Activated CD4-positive, alpha-beta T cell treated with anti-CD3 and anti-CD28 coated beads for 36 hours (primary cell): ENCODE measurements at regions of chr2 and their contacts with region 1.

Region 1: GRCh38 chr2:173134703-173135102 is 59.1 kb downstream of the MAP3K20 start:
- DNase-seq: peak; percentile 16
- ATAC-seq: no peak
- H3K4me3 Mint-ChIP-seq: no peak overlapping the region
- H3K27ac Mint-ChIP-seq: no peak overlapping the region
- H3K4me1 Mint-ChIP-seq: peaks cover 51% of the 10 kb centered on the region
- H3K27me3 Mint-ChIP-seq: peaks cover 38% of the 10 kb centered on the region

Region 2: GRCh38 chr2:173075781-173076580 is 58.7 kb before region 1 on chr2 and contains the start of gene MAP3K20:
- CTCF ChIA-PET with region 1: no interaction called
- POLR2A ChIA-PET with region 1: no interaction called
- intact Hi-C with region 1: loop called in 1 of 2 experiments (anchors 2 kb)
- DNase-seq: peak; percentile 73
- ATAC-seq: peak; percentile 85
- H3K4me3 Mint-ChIP-seq: peak within 1 kb of the TSS; percentile 76
- H3K27ac Mint-ChIP-seq: peak within 1 kb of the TSS; percentile 76
- H3K4me1 Mint-ChIP-seq: peaks cover 22% of the 10 kb centered on the region
- H3K27me3 Mint-ChIP-seq: peaks cover 33% of the 10 kb centered on the region
- total RNA-seq, gene MAP3K20: 8.1 to 8.4 TPM

Region 3: GRCh38 chr2:173145454-173145853 is 10.8 kb after region 1 on chr2:
- CTCF ChIA-PET with region 1: interaction called, 4 read pairs
- POLR2A ChIA-PET with region 1: no interaction called
- intact Hi-C with region 1: loop called in 1 of 2 experiments (anchors 1 kb)
- DNase-seq: no peak
- ATAC-seq: peak; percentile 42
- H3K4me3 Mint-ChIP-seq: no peak overlapping the region
- H3K27ac Mint-ChIP-seq: no peak overlapping the region
- H3K4me1 Mint-ChIP-seq: peaks cover 27% of the 10 kb centered on the region
- H3K27me3 Mint-ChIP-seq: peaks cover 14% of the 10 kb centered on the region

Region 4: DNA sequence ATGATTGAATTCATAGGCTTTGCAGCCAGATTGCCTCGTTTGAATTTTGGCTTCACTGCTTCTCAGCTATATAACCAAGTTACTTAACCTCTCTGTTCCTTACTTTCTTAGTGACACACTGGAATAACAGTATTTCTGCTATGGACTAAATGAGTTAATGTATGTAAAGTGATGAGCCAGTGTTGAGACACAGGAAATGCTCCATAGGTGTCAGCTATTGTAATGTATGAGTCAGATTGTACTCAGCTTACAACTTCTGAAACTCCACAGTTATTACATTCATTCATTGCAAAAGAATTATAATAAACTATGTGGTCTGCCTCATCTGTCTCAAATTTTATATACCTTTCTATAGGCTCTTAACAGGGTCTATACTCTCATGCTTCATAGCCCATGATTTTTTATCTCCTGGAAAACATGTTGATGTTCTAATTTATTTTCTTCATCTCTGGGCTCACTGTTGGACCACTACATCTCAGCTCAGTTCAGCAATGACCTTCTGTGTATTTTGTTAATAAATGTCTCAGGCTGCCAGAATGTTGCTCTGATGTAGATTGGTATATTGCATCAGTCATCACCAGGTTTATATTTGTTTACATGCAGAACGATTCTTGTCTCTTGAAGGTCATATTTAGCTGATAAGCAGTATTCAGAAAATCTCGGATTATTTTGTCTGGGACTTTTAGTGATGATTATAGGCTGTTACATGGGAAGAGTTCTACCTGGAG is 17.1 kb after region 1 on chr2:
- CTCF ChIA-PET with region 1: interaction called, 3 read pairs
- POLR2A ChIA-PET with region 1: interaction called, 3 read pairs
- intact Hi-C with region 1: loop called (anchors 1 kb)
- DNase-seq: no peak
- ATAC-seq: peak; percentile 90
- H3K4me3 Mint-ChIP-seq: no peak overlapping the region
- H3K27ac Mint-ChIP-seq: no peak overlapping the region
- H3K4me1 Mint-ChIP-seq: peaks cover 39% of the 10 kb centered on the region
- H3K27me3 Mint-ChIP-seq: peaks cover 21% of the 10 kb centered on the region

Region 5: GRCh38 chr2:173264603-173265366 is 130.1 kb after region 1 on chr2:
- CTCF ChIA-PET with region 1: no interaction called
- POLR2A ChIA-PET with region 1: no interaction called
- intact Hi-C with region 1: no loop called
- DNase-seq: peak; percentile 58
- ATAC-seq: peak; percentile 97
- H3K4me3 Mint-ChIP-seq: peak overlapping the region; percentile 7
- H3K27ac Mint-ChIP-seq: peak overlapping the region; percentile 11
- H3K4me1 Mint-ChIP-seq: peaks cover 12% of the 10 kb centered on the region
- H3K27me3 Mint-ChIP-seq: no peaks in the 10 kb centered on the region

Region 6: DNA sequence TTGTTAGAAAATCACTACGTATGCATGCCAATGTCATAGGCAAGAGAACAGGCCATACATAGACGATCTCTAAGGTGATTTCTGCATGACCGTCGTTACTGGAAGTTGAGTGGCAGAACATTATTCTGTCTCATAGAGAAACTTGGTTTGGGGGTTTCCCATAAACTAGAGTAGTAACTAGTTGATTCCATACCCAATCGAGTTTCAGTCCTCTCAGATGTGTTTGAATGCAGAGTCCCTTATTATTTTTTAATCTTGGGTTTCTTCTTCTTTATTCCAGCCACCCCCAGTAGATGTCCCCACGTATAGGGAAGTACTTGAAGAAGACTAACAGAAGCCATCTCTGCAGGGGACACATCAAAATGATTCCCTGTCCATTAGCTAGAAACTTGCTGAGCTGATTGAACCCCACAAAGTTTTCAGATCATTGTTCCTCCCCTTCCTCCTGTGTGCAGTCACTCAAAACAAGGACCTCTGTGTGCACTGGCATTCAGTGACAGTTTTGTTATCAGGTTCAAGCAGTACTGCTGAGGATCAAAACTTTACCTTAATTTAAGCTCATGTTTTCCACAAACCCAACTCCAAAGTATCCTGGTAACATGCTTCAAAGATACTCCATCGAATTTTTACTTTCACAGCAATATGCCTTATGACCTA is 151.6 kb after region 1 on chr2:
- CTCF ChIA-PET with region 1: no interaction called
- POLR2A ChIA-PET with region 1: no interaction called
- intact Hi-C with region 1: loop called in 1 of 2 experiments (anchors 2 kb)
- DNase-seq: peak; percentile 20
- ATAC-seq: peak; percentile 86
- H3K4me3 Mint-ChIP-seq: no peak overlapping the region
- H3K27ac Mint-ChIP-seq: peak overlapping the region; percentile 60
- H3K4me1 Mint-ChIP-seq: peaks cover 16% of the 10 kb centered on the region
- H3K27me3 Mint-ChIP-seq: peaks cover 3% of the 10 kb centered on the region

Region 7: GRCh38 chr2:174492963-174493431 is 1358.3 kb after region 1 on chr2:
- CTCF ChIA-PET with region 1: no interaction called
- POLR2A ChIA-PET with region 1: no interaction called
- intact Hi-C with region 1: loop called in 1 of 2 experiments (anchors 10 kb)
- DNase-seq: peak; percentile 75
- ATAC-seq: peak; percentile 81
- H3K4me3 Mint-ChIP-seq: peak overlapping the region; percentile 72
- H3K27ac Mint-ChIP-seq: peak overlapping the region; percentile 95
- H3K4me1 Mint-ChIP-seq: peaks cover 79% of the 10 kb centered on the region
- H3K27me3 Mint-ChIP-seq: no peaks in the 10 kb centered on the region